ENCODE measurements at regions of chr1 and their contacts with region 1.

Region 1: GRCh38 chr1:26203642-26204318 is 13.4 kb downstream of the CATSPER4 start:
- DNase-seq: no peak
- ATAC-seq: no peak
- H3K4me3 ChIP-seq: no peak overlapping the region
- H3K4me3 Mint-ChIP-seq: peak overlapping the region in 1 of 10 donors; percentile 90
- H3K27ac ChIP-seq: no peak overlapping the region
- H3K27ac Mint-ChIP-seq: peak overlapping the region in 7 of 9 donors; percentile 75 to 98 (median 89)
- H3K4me1 ChIP-seq: peaks cover 8 to 28% of the 10 kb centered on the region in 2 donors
- H3K4me1 Mint-ChIP-seq: peaks cover 21 to 54% (median 39%) of the 10 kb centered on the region in 7 donors
- H3K27me3 ChIP-seq: no peaks in the 10 kb centered on the region
- H3K27me3 Mint-ChIP-seq: peaks cover 0 to 2% (median 0%) of the 10 kb centered on the region in 5 donors

Region 2: GRCh38 chr1:26190373-26190987 is 13.3 kb before region 1 on chr1 and contains the start of gene CATSPER4:
- CTCF ChIA-PET with region 1: interaction called, 3 read pairs
- POLR2A ChIA-PET with region 1: no interaction called
- intact Hi-C with region 1: loop called in 1 of 2 experiments (anchors 1 kb)
- DNase-seq: peak in 3 of 9 donors; percentile 19 to 27 (median 20)
- ATAC-seq: no peak
- H3K4me3 ChIP-seq: no peak within 1 kb of the TSS
- H3K4me3 Mint-ChIP-seq: peak within 1 kb of the TSS in 3 of 10 donors; percentile 4 to 77 (median 65)
- H3K27ac ChIP-seq: no peak within 1 kb of the TSS
- H3K27ac Mint-ChIP-seq: peak within 1 kb of the TSS in 6 of 9 donors; percentile 11 to 78 (median 60)
- H3K4me1 ChIP-seq: peaks cover 0 to 8% of the 10 kb centered on the region in 2 donors
- H3K4me1 Mint-ChIP-seq: peaks cover 8 to 37% (median 23%) of the 10 kb centered on the region in 7 donors
- H3K27me3 ChIP-seq: no peaks in the 10 kb centered on the region
- H3K27me3 Mint-ChIP-seq: peaks cover 0 to 4% (median 0%) of the 10 kb centered on the region in 5 donors
- total RNA-seq, gene CATSPER4: not detected